ENCODE measurements at regions of chr15 and their contacts with region 1.

Region 1: DNA sequence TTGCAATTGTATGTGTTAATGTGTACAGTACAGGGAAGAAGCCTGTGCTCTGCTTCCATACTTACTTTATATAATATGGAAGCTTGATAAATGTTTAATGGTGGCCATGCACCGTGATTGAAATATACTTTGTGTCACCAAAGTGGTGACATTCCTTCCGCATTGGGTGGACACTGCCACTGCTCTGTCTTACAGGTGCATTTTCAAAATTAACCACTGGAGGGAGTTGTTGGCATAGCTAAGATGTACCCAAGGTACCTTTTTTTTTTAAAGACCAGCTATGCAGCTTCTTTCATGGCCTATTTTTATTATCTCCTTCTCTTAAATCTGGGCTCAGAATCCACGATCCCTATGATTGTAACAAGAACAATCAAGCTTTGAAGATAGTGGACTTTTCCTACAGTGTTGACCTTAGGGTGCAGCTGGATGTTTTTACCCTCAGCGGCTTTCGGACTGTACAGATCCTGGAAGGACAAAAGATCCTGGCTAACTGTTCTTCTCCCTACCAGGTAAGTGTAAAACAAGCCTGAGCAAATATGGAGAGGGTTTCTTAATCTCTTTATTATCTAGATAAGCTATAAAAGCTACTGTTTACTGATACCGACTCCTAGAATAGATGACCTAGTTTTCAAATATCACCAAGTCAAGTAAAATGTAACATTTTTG is 21.6 kb upstream of the PAK6 start:
- DNase-seq: peak; percentile 71
- H3K4me3 ChIP-seq: no peak overlapping the region
- H3K27ac ChIP-seq: peak overlapping the region; percentile 3 to 39
- H3K4me1 ChIP-seq: peaks cover 9% of the 10 kb centered on the region
- H3K27me3 ChIP-seq: no peaks in the 10 kb centered on the region
- CTCF ChIP-seq: peak; percentile 85 to 95 (median 88)
- POLR2A ChIP-seq: no peak

Region 2: DNA sequence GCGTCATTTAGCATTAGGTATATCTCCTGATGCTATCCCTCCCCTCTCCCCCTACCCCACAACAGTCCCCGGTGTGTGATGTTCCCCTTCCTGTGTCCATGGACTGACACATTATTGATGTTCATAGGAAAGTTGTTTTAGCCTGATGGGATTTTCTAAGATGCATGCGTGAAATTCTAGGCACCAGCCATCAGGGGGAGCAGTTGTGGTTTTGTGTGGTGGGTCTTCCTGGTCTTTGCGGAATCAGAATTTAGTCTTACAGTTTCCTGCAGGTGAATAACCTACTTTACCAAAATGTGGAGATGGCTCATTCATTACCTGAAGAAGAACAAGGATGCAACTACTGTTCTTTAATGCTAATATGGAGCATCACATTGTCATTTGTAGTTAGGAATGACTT is 1091.4 kb before region 1 on chr15:
- intact Hi-C with region 1: no loop called
- DNase-seq: peak; percentile 31
- H3K4me3 ChIP-seq: no peak overlapping the region
- H3K27ac ChIP-seq: no peak overlapping the region
- H3K4me1 ChIP-seq: peaks cover 19% of the 10 kb centered on the region
- H3K27me3 ChIP-seq: no peaks in the 10 kb centered on the region
- CTCF ChIP-seq: peak in 2 of 3 experiments; percentile 40 to 50
- POLR2A ChIP-seq: no peak

Region 3: DNA sequence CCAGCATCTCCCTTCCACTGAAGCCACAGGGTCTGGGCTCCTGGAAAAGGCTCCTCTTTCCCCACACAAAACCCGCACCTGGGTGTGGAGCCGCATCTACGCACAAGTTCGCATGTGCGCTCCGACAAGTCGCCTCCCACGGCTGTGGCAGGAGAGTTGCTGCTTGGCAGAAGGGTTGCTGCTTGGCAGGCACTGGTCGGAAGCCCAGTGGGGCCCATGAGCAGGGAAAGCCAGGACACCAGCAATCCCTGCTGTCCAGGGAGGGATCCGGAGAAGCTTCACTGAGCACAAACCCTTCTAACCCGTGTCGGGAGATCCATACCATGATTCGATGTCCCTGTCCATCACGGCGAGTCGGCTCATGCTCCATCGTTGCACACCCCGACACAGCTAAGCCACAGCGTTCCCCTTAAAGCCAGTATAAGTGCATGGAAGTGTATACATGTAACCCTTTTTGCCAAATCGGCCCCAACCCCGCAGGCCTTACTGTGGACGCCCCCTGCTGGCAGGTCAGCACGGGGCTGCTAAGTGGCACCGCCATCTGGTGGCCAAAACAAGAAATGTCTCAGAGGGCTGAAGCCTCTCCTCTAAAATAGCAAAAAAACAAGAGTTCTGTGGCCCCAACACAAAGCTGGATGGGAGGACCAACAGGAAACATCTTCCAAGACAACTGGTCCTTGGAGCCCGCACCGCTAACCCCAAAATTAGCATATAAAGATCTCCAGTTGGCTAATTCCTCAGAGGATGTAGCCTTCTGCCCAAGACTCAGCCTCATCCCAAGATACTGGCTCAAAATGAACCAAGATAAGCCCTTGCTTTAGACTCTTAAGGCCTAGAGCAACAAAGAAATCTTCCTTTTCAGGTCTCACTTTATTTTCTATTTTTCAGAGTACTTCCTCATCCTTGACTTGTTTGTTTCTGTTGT is 57.3 kb after region 1 on chr15:
- intact Hi-C with region 1: loop called (anchors 5 kb)
- DNase-seq: peak; percentile 90
- H3K4me3 ChIP-seq: no peak overlapping the region
- H3K27ac ChIP-seq: peak overlapping the region in 1 of 2 donors; percentile 59
- H3K4me1 ChIP-seq: peaks cover 58% of the 10 kb centered on the region
- H3K27me3 ChIP-seq: no peaks in the 10 kb centered on the region
- CTCF ChIP-seq: peak; percentile 100
- POLR2A ChIP-seq: no peak

Measured in testis (tissue), 5 donors.